Endothelial cell of umbilical vein (primary cell): ENCODE measurements at regions of chr17 and their contacts with region 1.

Region 1: GRCh38 chr17:19513897-19514488 is 19.7 kb upstream of the SLC47A1 start:
- DNase-seq: peak; percentile 73
- H3K4me3 ChIP-seq: no peak overlapping the region
- H3K27ac ChIP-seq: no peak overlapping the region
- H3K4me1 ChIP-seq: no peaks in the 10 kb centered on the region
- H3K27me3 ChIP-seq: no peaks in the 10 kb centered on the region
- CTCF ChIP-seq: peak; percentile 81 to 90
- POLR2A ChIP-seq: no peak

Region 2: DNA sequence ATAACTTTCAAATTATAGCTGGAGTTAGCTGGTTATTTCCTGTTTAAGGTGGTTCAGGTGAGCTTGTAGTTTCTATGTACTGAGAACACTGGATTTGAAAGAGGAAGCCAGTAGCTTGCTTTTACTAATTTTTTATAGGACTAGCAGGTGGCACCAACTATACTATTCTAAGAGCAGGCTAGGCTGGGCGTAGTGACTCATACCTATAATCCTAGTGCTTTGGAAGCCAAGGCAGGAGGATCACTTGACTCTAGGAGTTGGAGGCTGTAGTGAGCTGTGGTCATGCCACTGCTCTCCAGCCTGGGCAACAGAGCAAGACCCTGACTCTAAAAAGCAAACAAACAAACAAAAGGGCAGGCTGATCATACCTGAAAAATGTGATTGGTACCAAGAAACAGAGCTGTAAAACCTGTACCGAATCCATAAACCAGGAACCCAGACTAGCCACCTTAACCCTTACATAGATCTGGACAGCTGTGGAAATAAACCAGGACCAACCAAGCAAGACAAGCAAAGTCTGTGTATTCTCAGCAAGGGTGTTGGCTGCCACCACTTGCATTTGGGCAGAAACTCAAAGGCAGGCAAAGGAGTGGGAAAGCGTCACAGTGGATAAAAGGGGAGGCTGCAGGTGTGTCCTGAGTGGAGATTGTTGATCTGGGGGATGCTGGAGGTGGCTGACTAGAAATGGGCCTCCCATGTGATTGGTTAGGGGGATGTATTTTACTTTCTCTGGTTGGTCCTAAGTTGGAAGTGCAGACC is 56.0 kb after region 1 on chr17:
- CTCF ChIA-PET with region 1: no interaction called
- POLR2A ChIA-PET with region 1: no interaction called
- dilution Hi-C with region 1: no loop called
- intact Hi-C with region 1: no loop called
- DNase-seq: no peak
- H3K4me3 ChIP-seq: no peak overlapping the region
- H3K27ac ChIP-seq: no peak overlapping the region
- H3K4me1 ChIP-seq: no peaks in the 10 kb centered on the region
- H3K27me3 ChIP-seq: no peaks in the 10 kb centered on the region
- CTCF ChIP-seq: no peak
- POLR2A ChIP-seq: no peak

Region 3: DNA sequence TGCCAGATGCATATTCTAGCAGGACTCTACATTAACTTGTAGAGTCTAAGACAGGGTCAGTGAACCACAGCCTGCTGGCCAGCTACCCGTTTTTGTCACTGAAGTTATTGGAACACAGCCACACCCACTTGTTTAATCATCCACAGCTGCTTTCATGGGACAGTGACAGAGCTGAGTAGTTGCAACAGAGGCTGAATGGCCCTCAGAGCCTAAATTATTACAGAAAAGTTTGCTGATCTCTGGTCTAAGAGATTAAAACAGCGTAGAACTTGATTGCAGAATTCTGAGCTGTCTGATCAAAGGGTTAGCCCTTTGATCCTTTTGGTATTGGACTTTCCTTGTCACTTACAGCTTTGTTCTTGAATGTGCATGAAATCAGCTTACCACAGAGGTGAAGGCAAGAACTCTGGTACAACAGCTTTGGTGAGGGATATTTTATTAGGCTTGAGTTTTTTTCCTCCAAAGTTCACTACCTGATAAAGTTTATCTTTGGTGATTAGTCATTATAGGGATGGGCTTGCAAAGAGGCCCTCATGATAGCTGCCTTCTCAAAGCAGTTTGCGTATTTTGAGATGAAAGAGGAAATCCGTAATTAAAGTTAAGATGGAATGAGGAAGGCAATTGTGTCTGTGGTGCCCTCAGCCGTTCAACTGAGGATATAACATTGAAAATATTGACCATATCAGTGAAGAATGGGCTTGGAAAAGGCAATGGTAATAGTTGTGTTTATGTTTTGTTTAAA is 158.2 kb after region 1 on chr17:
- CTCF ChIA-PET with region 1: interaction called, 12 read pairs
- POLR2A ChIA-PET with region 1: no interaction called
- dilution Hi-C with region 1: no loop called
- intact Hi-C with region 1: loop called (anchors 1 kb)
- DNase-seq: peak; percentile 11
- H3K4me3 ChIP-seq: no peak overlapping the region
- H3K27ac ChIP-seq: no peak overlapping the region
- H3K4me1 ChIP-seq: no peaks in the 10 kb centered on the region
- H3K27me3 ChIP-seq: no peaks in the 10 kb centered on the region
- CTCF ChIP-seq: no peak
- POLR2A ChIP-seq: no peak